Activated CD4-positive, alpha-beta memory T cell treated with anti-CD3 and anti-CD28 coated beads for 36 hours (primary cell): ENCODE measurements at regions of chr10 and their contacts with region 1.

Region 1: GRCh38 chr10:80444646-80445319 is 9.3 kb upstream of the TSPAN14 start:
- DNase-seq: peak; percentile 82
- H3K4me3 Mint-ChIP-seq: no peak overlapping the region
- H3K27ac Mint-ChIP-seq: peak overlapping the region; percentile 7
- H3K4me1 Mint-ChIP-seq: peaks cover 56% of the 10 kb centered on the region
- H3K27me3 Mint-ChIP-seq: no peaks in the 10 kb centered on the region

Region 2: GRCh38 chr10:80382989-80383388 is 61.8 kb before region 1 on chr10:
- CTCF ChIA-PET with region 1: interaction called, 29 read pairs
- POLR2A ChIA-PET with region 1: no interaction called
- intact Hi-C with region 1: loop called (anchors 1 kb)
- DNase-seq: peak; percentile 54
- H3K4me3 Mint-ChIP-seq: no peak overlapping the region
- H3K27ac Mint-ChIP-seq: no peak overlapping the region
- H3K4me1 Mint-ChIP-seq: peaks cover 12% of the 10 kb centered on the region
- H3K27me3 Mint-ChIP-seq: peaks cover 5% of the 10 kb centered on the region

Region 3: DNA sequence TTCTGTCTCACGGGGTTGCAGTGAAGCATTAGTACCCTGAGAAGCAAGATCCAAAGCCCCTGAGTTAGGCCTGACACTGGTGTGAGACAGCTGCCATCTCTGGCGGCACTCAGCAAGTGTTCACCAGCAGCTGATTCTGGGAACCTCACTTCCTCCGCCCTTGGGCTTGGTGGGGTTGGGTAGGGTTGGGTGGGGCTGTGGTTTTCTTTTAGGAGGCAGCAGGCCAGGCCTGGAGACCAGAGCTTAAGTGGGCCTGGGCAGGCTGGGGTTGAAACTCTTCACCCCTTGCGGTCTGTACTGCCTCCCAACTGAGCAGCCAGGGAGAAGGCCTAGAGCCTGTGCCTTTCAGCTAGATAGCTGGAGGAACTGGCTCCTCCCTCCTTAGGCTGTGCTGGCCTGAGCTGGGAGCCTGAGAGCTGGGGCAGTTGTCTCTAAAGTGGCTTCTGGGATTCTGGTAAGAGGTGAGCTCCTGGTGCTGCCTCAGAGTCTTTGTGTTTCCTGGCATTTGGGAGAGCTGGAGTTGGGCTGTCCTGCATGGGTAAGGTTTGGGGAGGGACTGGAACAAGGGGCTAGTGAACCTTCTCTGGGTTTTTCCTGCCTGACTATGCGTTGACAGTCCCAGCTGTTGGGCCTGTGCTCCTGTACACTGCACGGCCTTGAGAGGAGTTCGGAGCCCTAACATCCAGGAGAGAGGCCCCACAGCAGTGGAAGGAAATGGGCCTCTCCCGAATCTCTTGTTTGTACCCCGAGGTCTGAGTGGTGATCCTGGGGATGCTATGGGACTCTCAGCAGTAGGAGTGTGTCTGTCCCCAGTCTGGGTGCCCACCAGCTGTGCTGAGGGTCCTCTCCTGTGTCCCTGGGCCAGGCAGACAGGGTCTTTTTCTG is 14.5 kb after region 1 on chr10:
- CTCF ChIA-PET with region 1: interaction called, 39 read pairs
- POLR2A ChIA-PET with region 1: interaction called, 4 read pairs
- intact Hi-C with region 1: no loop called
- DNase-seq: peak; percentile 85
- H3K4me3 Mint-ChIP-seq: peak overlapping the region; percentile 77
- H3K27ac Mint-ChIP-seq: peak overlapping the region; percentile 97
- H3K4me1 Mint-ChIP-seq: peaks cover 84% of the 10 kb centered on the region
- H3K27me3 Mint-ChIP-seq: no peaks in the 10 kb centered on the region

Region 4: GRCh38 chr10:80493522-80494051 is 48.8 kb after region 1 on chr10:
- CTCF ChIA-PET with region 1: interaction called, 1,168 read pairs
- POLR2A ChIA-PET with region 1: interaction called, 3 read pairs
- intact Hi-C with region 1: no loop called
- DNase-seq: no peak
- H3K4me3 Mint-ChIP-seq: peak overlapping the region; percentile 18
- H3K27ac Mint-ChIP-seq: peak overlapping the region; percentile 88
- H3K4me1 Mint-ChIP-seq: peaks cover 99% of the 10 kb centered on the region
- H3K27me3 Mint-ChIP-seq: no peaks in the 10 kb centered on the region

Region 5: DNA sequence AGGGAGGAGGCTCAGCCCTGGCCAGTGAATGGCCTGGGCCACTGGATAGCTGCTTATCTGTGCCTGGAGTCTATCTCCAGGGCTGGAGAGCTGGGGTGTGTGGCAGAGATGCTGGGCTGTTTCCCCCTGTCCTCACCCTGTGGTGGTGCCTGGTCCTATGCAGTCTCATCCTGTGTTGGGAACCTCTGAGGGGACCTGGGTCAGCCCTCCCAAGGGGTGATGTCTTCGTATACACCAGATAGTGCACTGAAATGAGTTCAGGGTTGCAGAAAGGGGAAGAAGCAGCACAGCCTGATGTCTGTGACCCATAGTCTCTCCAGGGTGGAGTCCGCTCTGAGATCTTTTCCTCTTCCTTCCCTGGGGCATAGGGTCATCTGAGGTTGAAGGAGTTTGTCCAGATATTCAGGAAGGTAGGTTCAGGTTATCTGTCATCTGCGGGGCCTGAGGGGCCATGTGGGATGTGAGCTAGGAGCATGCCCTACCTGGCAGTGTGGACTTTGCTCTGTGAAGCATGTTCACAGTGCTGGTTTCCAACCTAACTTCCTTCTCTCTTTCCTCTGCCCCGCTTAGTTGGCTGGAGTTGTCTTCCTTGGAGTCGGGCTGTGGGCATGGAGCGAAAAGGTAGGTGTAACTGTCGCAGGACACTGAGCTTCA is 59.5 kb after region 1 on chr10:
- CTCF ChIA-PET with region 1: interaction called, 1,168 read pairs
- POLR2A ChIA-PET with region 1: interaction called, 9 read pairs
- intact Hi-C with region 1: loop called (anchors 1 kb)
- DNase-seq: no peak
- H3K4me3 Mint-ChIP-seq: no peak overlapping the region
- H3K27ac Mint-ChIP-seq: peak overlapping the region; percentile 93
- H3K4me1 Mint-ChIP-seq: peaks cover 63% of the 10 kb centered on the region
- H3K27me3 Mint-ChIP-seq: no peaks in the 10 kb centered on the region

Region 6: DNA sequence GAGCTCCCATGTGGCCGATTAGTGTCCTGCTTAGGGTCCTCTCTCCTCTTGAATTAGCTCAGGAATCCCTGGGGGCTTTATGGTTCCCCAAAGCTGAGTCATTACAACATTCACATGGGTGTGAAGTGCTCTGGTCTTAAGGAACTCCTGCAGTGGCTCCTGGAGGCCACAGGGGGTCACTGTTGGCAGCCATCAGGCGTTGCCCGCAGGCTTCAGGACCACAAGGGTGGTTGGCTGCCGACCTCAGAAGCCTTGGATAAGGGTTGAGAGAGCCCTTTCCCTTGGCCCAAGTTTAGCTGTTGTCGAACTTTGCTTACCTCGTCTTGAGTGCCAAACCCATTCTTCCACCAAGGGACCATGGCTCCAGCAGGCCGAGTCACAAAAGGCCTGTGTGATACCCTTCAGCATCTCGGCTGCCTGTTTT is 154.7 kb after region 1 on chr10:
- CTCF ChIA-PET with region 1: interaction called, 25 read pairs
- POLR2A ChIA-PET with region 1: no interaction called
- intact Hi-C with region 1: loop called (anchors 2 kb)
- DNase-seq: peak; percentile 55
- H3K4me3 Mint-ChIP-seq: no peak overlapping the region
- H3K27ac Mint-ChIP-seq: no peak overlapping the region
- H3K4me1 Mint-ChIP-seq: no peaks in the 10 kb centered on the region
- H3K27me3 Mint-ChIP-seq: no peaks in the 10 kb centered on the region

Region 7: GRCh38 chr10:80699602-80700039 is 254.8 kb after region 1 on chr10:
- CTCF ChIA-PET with region 1: interaction called, 6 read pairs
- POLR2A ChIA-PET with region 1: no interaction called
- intact Hi-C with region 1: loop called (anchors 10 kb)
- DNase-seq: peak; percentile 80
- H3K4me3 Mint-ChIP-seq: no peak overlapping the region
- H3K27ac Mint-ChIP-seq: no peak overlapping the region
- H3K4me1 Mint-ChIP-seq: no peaks in the 10 kb centered on the region
- H3K27me3 Mint-ChIP-seq: no peaks in the 10 kb centered on the region